Head of caudate nucleus (tissue), 42 donors: ENCODE measurements at regions of chr20 and their contacts with region 1.

Region 1: GRCh38 chr20:53216856-53217576 is 244.9 kb downstream of the TSHZ2 start:
- DNase-seq: peak; percentile 45 to 89 (median 74)

Region 2: DNA sequence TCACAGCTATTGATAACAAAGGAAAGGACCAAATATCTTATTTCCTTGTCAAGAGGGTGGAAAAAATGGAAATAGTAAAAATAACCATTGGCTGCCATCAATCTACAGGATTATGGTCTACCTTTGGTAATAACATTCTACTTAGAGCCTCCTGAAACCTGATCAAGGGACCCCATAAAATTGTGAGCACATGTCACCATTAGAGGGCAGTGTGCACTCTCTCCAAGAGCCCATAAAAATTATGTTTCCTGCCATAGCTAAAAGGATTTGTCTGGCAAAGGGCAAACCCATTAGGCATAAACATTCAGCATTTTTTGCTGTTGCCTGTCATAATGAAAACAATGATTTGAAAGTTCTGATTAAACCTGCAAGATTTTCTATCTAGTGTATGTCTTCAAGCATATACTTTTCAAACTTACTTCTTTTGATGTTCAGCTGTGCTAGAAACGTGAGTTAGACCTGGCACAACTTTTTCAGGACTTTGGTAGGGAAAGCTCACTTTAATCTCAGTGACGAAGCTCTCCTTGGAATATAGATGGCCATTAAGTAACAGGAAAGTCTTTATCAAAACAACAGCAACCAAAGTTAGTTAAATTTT is 904.8 kb before region 1 on chr20:
- intact Hi-C with region 1: loop called (anchors 10 kb)
- DNase-seq: peak in 25 of 42 donors; percentile 7 to 75 (median 42)